ENCODE measurements at regions of chr19 and their contacts with region 1.

Region 1: GRCh38 chr19:9621156-9622037 is at the start of gene ZNF561:
- DNase-seq: peak; percentile 93 to 95
- ATAC-seq: peak; percentile 95
- H3K4me3 ChIP-seq: peak within 1 kb of the TSS; percentile 12 to 48
- H3K27ac ChIP-seq: peak within 1 kb of the TSS; percentile 24 to 45
- H3K4me1 ChIP-seq: no peaks in the 10 kb centered on the region
- H3K27me3 ChIP-seq: no peaks in the 10 kb centered on the region
- total RNA-seq, gene ZNF561: 37.5 to 38.3 TPM

Region 2: DNA sequence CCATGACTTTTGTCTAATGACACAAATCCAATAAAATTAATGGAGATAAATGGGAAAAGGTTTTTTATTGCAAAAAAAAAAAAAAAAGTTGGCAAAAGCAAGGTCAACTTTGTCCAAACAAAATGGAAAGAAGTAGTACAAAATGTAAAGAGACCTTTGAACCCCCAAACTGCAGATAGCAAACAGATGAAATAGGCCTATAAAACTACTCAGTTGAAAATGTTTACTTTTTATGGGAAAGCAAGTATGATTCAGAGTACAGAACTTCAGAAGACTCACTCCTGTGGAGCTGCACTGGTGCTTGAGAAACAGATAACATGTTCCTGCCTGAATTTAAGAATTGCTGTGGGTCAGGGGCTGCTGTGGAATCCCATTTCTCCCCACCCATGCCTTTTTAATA is 268.4 kb before region 1 on chr19:
- intact Hi-C with region 1: no loop called
- DNase-seq: no peak
- ATAC-seq: no peak
- H3K4me3 ChIP-seq: no peak overlapping the region
- H3K27ac ChIP-seq: no peak overlapping the region
- H3K4me1 ChIP-seq: no peaks in the 10 kb centered on the region
- H3K27me3 ChIP-seq: no peaks in the 10 kb centered on the region

Region 3: GRCh38 chr19:9584073-9584833 is 37.1 kb before region 1 on chr19 and contains the start of gene ZNF121:
- intact Hi-C with region 1: loop called in 1 of 2 experiments (anchors 2 kb)
- DNase-seq: peak; percentile 91 to 95
- ATAC-seq: peak; percentile 98
- H3K4me3 ChIP-seq: peak within 1 kb of the TSS; percentile 52 to 56
- H3K27ac ChIP-seq: peak within 1 kb of the TSS in 1 of 2 donors; percentile 58
- H3K4me1 ChIP-seq: peaks cover 2 to 3% of the 10 kb centered on the region in 2 donors
- H3K27me3 ChIP-seq: no peaks in the 10 kb centered on the region
- total RNA-seq, gene ZNF121: 28.4 to 31.2 TPM

Region 4: GRCh38 chr19:9658769-9659168 is 37.4 kb after region 1 on chr19:
- intact Hi-C with region 1: no loop called
- DNase-seq: no peak
- ATAC-seq: no peak
- H3K4me3 ChIP-seq: no peak overlapping the region
- H3K27ac ChIP-seq: no peak overlapping the region
- H3K4me1 ChIP-seq: no peaks in the 10 kb centered on the region
- H3K27me3 ChIP-seq: no peaks in the 10 kb centered on the region

Region 5: GRCh38 chr19:9674663-9675357 is 53.4 kb after region 1 on chr19 and contains the start of gene ZNF562:
- intact Hi-C with region 1: loop called (anchors 2 to 10 kb)
- DNase-seq: peak; percentile 94 to 96
- ATAC-seq: peak; percentile 97
- H3K4me3 ChIP-seq: peak within 1 kb of the TSS; percentile 58 to 65
- H3K27ac ChIP-seq: peak within 1 kb of the TSS; percentile 11 to 72
- H3K4me1 ChIP-seq: peaks cover 0 to 2% of the 10 kb centered on the region in 2 donors
- H3K27me3 ChIP-seq: no peaks in the 10 kb centered on the region
- total RNA-seq, gene ZNF562: 33.6 to 35.9 TPM

Measured in aorta (tissue), 5 donors.